PC-9 (cell line): ENCODE measurements at regions of chr13 and their contacts with region 1.

Region 1: GRCh38 chr13:51797664-51798488 is 6.1 kb downstream of the DHRS12 start:
- DNase-seq: peak; percentile 54 to 66
- H3K4me3 ChIP-seq: no peak overlapping the region
- H3K27ac ChIP-seq: no peak overlapping the region
- H3K4me1 ChIP-seq: peaks cover 24% of the 10 kb centered on the region
- H3K27me3 ChIP-seq: no peaks in the 10 kb centered on the region
- CTCF ChIP-seq: peak; percentile 80

Region 2: GRCh38 chr13:51125498-51126226 is 672.2 kb before region 1 on chr13:
- CTCF ChIA-PET with region 1: interaction called, 21 read pairs
- POLR2A ChIA-PET with region 1: no interaction called
- intact Hi-C with region 1: loop called (anchors 5 kb)
- DNase-seq: peak in 1 of 2 experiments; percentile 41
- H3K4me3 ChIP-seq: no peak overlapping the region
- H3K27ac ChIP-seq: no peak overlapping the region
- H3K4me1 ChIP-seq: no peaks in the 10 kb centered on the region
- H3K27me3 ChIP-seq: peaks cover 19% of the 10 kb centered on the region; the same call in 1 of the 2 replicates
- CTCF ChIP-seq: peak; percentile 78

Region 3: GRCh38 chr13:51148952-51149573 is 648.8 kb before region 1 on chr13:
- CTCF ChIA-PET with region 1: interaction called, 3 read pairs
- POLR2A ChIA-PET with region 1: no interaction called
- intact Hi-C with region 1: loop called (anchors 1 kb)
- DNase-seq: peak; percentile 10 to 42
- H3K4me3 ChIP-seq: no peak overlapping the region
- H3K27ac ChIP-seq: no peak overlapping the region
- H3K4me1 ChIP-seq: no peaks in the 10 kb centered on the region
- H3K27me3 ChIP-seq: peaks cover 55% of the 10 kb centered on the region
- CTCF ChIP-seq: peak; percentile 59

Region 4: DNA sequence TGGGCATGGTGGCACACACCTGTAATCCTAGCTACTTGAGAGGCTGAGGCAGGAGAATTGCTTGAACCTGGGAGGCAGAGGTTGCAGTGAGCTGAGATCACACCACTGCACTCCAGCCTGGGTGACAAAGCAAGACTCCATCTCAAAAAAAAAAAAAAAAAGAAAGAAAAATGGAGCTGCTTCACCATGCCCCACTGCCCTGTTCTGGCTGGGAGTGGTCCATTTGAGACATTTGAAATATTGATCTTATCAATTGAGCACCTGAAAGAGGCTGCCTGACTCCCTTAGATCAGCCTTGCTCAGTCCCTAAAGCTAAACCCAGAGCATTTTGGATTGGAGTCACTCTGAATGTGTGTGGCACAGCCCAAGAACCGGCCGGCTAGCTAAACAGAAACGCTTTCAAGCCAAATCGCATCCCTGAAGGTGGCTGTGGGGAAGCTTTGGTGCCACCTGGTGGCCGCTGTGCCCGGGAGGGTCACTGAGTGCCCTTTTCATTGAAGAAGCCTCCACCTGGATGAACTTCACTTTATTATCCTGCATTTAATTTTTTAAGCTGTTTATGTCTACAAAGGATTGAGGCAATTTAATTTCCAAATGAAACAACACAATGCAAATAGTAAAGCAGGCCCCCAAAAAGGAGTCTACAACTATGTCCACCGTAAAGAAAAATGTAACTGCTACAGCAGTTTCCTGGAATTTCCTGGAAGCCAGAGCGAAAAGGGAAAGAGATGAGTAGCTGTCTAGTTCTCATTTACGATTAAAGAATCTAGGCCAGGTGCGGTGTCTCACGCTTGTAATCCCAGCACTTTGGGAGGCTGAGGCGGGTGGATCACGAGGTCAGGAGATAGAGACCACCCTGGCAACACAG is 511.5 kb before region 1 on chr13:
- CTCF ChIA-PET with region 1: interaction called, 4 read pairs
- POLR2A ChIA-PET with region 1: interaction called, 3 read pairs
- intact Hi-C with region 1: loop called (anchors 10 kb)
- DNase-seq: peak; percentile 39 to 70
- H3K4me3 ChIP-seq: no peak overlapping the region
- H3K27ac ChIP-seq: no peak overlapping the region
- H3K4me1 ChIP-seq: no peaks in the 10 kb centered on the region
- H3K27me3 ChIP-seq: peaks cover 50% of the 10 kb centered on the region
- CTCF ChIP-seq: peak; percentile 88

Region 5: GRCh38 chr13:51435002-51435578 is 362.8 kb before region 1 on chr13:
- CTCF ChIA-PET with region 1: interaction called, 12 read pairs
- POLR2A ChIA-PET with region 1: interaction called, 9 read pairs
- intact Hi-C with region 1: loop called (anchors 2 kb)
- DNase-seq: no peak
- H3K4me3 ChIP-seq: no peak overlapping the region
- H3K27ac ChIP-seq: no peak overlapping the region
- H3K4me1 ChIP-seq: no peaks in the 10 kb centered on the region
- H3K27me3 ChIP-seq: no peaks in the 10 kb centered on the region
- CTCF ChIP-seq: peak; percentile 80

Region 6: DNA sequence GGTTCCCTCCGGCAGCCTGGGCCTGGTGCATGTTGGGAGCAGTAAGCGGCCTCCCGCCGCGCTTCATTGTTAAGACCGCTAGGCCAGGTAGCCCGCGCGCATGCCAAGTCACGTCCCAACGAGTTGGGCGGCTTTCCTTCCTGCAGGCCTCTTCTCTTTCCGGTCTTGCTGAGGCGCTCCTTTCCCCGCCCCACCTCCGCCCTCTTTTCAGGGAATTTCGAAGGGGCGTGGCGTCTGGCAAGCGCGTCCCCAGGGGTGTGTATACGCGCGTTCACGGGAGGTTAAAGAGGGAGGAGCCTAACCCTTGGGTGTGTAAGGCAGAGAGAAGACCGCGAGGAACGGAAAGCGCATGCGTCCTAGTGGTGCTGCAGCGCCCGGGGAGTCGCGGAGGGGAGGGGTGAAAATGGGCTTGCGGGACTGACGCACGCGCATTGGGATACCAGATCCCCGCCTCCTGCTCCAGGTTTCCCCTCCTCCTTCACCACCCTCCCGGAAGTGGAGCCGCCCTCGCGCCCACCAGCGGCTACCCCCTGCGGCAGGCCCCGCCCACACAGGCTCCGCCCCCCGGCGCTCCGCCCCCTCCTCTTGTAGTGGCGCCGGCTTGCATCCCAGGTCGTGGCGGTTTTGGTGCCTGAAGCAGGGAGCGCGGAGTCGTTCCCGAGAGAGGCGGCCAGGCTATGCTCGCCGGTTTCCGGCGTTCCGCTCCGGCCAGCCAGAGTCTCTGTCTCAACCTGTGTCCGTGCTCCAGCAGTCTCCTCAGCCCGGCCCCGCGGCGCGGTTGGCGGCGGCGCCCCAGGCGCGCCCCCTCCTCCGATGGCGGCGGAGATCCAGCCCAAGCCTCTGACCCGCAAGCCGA is 213.8 kb before region 1 on chr13 and contains the start of gene WDFY2:
- CTCF ChIA-PET with region 1: interaction called, 8 read pairs
- POLR2A ChIA-PET with region 1: no interaction called
- intact Hi-C with region 1: loop called (anchors 1 kb)
- DNase-seq: peak; percentile 98 to 99
- H3K4me3 ChIP-seq: peak within 1 kb of the TSS; percentile 91
- H3K27ac ChIP-seq: peak within 1 kb of the TSS; percentile 69
- H3K4me1 ChIP-seq: peaks cover 28% of the 10 kb centered on the region
- H3K27me3 ChIP-seq: no peaks in the 10 kb centered on the region
- CTCF ChIP-seq: 0 out of 2 replicates have a peak, but pooled peaks have one; percentile 11
- total RNA-seq, gene WDFY2: 14.1 and 14.3 TPM in 2 replicates

Region 7: DNA sequence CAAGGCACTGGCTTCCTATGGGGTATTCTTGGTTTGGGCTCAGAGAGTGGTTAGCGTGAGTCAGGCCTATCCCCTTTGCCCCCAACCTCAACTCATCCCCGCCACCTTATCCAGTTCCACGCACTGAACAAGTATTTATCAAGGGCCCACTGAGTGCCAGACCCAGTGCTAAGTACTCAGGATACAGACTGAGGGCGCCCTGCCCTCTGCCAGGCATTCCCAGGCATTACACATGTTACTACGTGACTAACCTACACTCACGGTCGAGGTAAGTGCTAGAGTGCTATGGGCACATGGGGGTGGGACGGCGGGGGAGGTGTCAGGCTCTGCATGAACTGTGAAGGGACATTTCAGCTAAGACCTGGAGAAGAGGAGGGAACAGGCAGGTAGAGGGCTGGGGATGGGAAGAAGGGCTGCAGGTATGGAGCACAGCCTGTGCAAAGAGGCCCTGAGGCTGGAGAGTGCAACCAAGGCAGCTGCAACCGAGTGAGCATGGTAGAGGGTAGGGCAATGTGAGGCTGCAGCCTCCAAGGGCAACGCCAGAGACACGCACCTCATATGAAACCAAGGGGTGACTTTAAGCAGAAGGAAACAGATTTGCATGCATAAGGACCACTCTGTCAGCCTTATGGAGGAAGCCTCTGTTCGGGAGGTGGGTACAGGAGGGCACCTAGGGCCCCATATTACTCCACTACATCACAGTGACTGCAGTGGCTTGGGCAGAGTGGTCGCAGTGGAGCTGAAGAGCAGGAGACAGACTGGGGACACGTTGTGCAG is 16.4 kb before region 1 on chr13:
- CTCF ChIA-PET with region 1: interaction called, 4 read pairs
- POLR2A ChIA-PET with region 1: interaction called, 14 read pairs
- intact Hi-C with region 1: no loop called
- DNase-seq: no peak
- H3K4me3 ChIP-seq: no peak overlapping the region
- H3K27ac ChIP-seq: no peak overlapping the region
- H3K4me1 ChIP-seq: no peaks in the 10 kb centered on the region
- H3K27me3 ChIP-seq: no peaks in the 10 kb centered on the region
- CTCF ChIP-seq: peak; percentile 54

Region 8: GRCh38 chr13:51887468-51887867 is 89.6 kb after region 1 on chr13:
- CTCF ChIA-PET with region 1: no interaction called
- POLR2A ChIA-PET with region 1: no interaction called
- intact Hi-C with region 1: no loop called
- DNase-seq: no peak
- H3K4me3 ChIP-seq: no peak overlapping the region
- H3K27ac ChIP-seq: no peak overlapping the region
- H3K4me1 ChIP-seq: no peaks in the 10 kb centered on the region
- H3K27me3 ChIP-seq: peaks cover 46% of the 10 kb centered on the region
- CTCF ChIP-seq: no peak